ENCODE measurements at regions of chr5 and their contacts with region 1.

Region 1: GRCh38 chr5:109161914-109162683 is 247.7 kb downstream of the PJA2 start:
- DNase-seq: peak; percentile 34
- ATAC-seq: peak; percentile 85
- H3K4me3 ChIP-seq: no peak overlapping the region
- H3K27ac ChIP-seq: peak overlapping the region; percentile 48; the same call in 1 of the 2 replicates
- H3K4me1 ChIP-seq: peaks cover 7% of the 10 kb centered on the region
- H3K27me3 ChIP-seq: no peaks in the 10 kb centered on the region
- CTCF ChIP-seq: no peak
- EP300 ChIP-seq: peak; percentile 93 to 99
- POLR2A ChIP-seq: no peak
- RAD21 ChIP-seq: 0 out of 2 replicates have a peak, but pooled peaks have one; percentile 10

Region 2: GRCh38 chr5:109105631-109106267 is 56.4 kb before region 1 on chr5:
- CTCF ChIA-PET with region 1: no interaction called
- POLR2A ChIA-PET with region 1: no interaction called
- RAD21 ChIA-PET with region 1: no interaction called
- SMC1A ChIA-PET with region 1: interaction called, 3 read pairs
- in situ Hi-C with region 1: no loop called
- intact Hi-C with region 1: loop called (anchors 10 kb)
- DNase-seq: no peak
- ATAC-seq: no peak
- H3K4me3 ChIP-seq: no peak overlapping the region
- H3K27ac ChIP-seq: no peak overlapping the region
- H3K4me1 ChIP-seq: no peaks in the 10 kb centered on the region
- H3K27me3 ChIP-seq: no peaks in the 10 kb centered on the region
- CTCF ChIP-seq: no peak
- EP300 ChIP-seq: no peak
- POLR2A ChIP-seq: no peak
- RAD21 ChIP-seq: no peak

Region 3: GRCh38 chr5:109546461-109546860 is 384.4 kb after region 1 on chr5:
- CTCF ChIA-PET with region 1: no interaction called
- POLR2A ChIA-PET with region 1: no interaction called
- RAD21 ChIA-PET with region 1: no interaction called
- SMC1A ChIA-PET with region 1: no interaction called
- in situ Hi-C with region 1: no loop called
- intact Hi-C with region 1: no loop called
- DNase-seq: no peak
- ATAC-seq: no peak
- H3K4me3 ChIP-seq: no peak overlapping the region
- H3K27ac ChIP-seq: no peak overlapping the region
- H3K4me1 ChIP-seq: no peaks in the 10 kb centered on the region
- H3K27me3 ChIP-seq: no peaks in the 10 kb centered on the region
- CTCF ChIP-seq: no peak
- EP300 ChIP-seq: no peak
- POLR2A ChIP-seq: no peak
- RAD21 ChIP-seq: no peak